Activated T-helper 2 cell treated with anti-CD3 and anti-CD28 coated beads, Interferon-gamma antibody, Interleukin-2, Interleukin-4, amounts not matched to agents 10 μg/mL and 5 μg/mL and 100 μg/mL, durations not matched to agents 14 hours and 24 hours and 36 hours (primary cell): ENCODE measurements at regions of chr6 and their contacts with region 1.

Region 1: GRCh38 chr6:146876271-146877151 is 277.7 kb downstream of the ADGB start:
- DNase-seq: no peak
- H3K4me3 Mint-ChIP-seq: no peak overlapping the region
- H3K27ac Mint-ChIP-seq: peak overlapping the region; percentile 85
- H3K4me1 Mint-ChIP-seq: peaks cover 27% of the 10 kb centered on the region
- H3K27me3 Mint-ChIP-seq: no peaks in the 10 kb centered on the region

Region 2: DNA sequence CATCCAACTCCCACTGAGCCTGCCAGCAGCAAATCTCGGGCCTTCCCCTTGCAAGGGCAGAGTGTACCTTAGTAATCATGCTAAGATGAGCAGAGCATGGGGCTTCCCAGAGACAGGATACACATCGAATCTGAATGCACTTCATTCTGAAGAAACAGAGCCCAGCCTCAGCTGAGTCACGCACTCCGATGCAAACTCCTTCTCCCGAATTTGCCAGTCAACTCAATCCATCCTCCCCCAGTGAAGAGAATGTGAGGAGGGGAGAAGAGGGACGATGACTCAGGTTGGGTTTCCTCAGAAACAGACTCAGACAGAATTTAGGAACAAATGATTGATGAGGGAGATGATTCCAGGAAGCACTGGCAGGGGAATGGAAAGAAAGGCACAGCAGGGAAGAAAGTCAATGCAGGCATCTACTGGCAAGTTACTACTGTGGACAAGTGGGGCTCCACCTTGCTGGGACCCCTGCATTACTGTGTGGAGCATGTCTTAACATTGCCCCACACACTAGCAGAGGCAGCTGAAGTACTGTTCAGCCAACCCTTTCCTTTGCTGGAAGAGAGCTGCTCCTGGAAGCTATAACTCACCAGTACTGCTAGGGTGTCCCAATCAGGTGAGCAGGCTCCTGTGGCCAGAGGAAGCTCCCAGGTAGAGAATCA is 26.1 kb before region 1 on chr6:
- intact Hi-C with region 1: loop called (anchors 1 kb)
- DNase-seq: no peak
- H3K4me3 Mint-ChIP-seq: no peak overlapping the region
- H3K27ac Mint-ChIP-seq: peak overlapping the region; percentile 81
- H3K4me1 Mint-ChIP-seq: peaks cover 36% of the 10 kb centered on the region
- H3K27me3 Mint-ChIP-seq: no peaks in the 10 kb centered on the region

Region 3: GRCh38 chr6:146913842-146914488 is 37.5 kb after region 1 on chr6:
- intact Hi-C with region 1: loop called (anchors 5 kb)
- DNase-seq: no peak
- H3K4me3 Mint-ChIP-seq: no peak overlapping the region
- H3K27ac Mint-ChIP-seq: peak overlapping the region; percentile 10
- H3K4me1 Mint-ChIP-seq: peaks cover 24% of the 10 kb centered on the region
- H3K27me3 Mint-ChIP-seq: no peaks in the 10 kb centered on the region

Region 4: DNA sequence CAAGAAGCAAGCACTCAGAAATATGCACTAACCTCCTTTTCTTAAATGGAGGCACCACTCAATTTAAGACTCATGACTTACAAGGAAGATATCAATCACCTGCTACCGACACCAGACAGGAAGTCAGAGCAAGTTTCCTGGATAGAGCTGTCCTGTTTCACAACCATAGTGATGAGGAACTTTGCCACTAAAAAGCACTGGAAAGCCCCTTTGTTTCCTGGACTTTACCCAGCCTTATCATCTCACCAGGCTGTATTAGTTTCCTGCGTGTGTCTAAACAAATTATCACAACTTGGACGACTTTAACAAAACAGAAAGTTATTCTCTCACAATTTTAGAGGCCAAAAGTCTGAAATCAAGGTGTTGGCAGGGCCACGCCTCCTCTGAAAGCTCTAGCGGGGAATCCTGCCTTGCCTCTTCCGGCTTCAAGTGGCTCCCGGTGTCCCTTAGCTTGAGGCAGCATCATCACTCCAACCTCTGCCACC is 73.9 kb after region 1 on chr6:
- intact Hi-C with region 1: loop called (anchors 1 kb)
- DNase-seq: no peak
- H3K4me3 Mint-ChIP-seq: no peak overlapping the region
- H3K27ac Mint-ChIP-seq: peak overlapping the region; percentile 70
- H3K4me1 Mint-ChIP-seq: peaks cover 12% of the 10 kb centered on the region
- H3K27me3 Mint-ChIP-seq: no peaks in the 10 kb centered on the region

Region 5: DNA sequence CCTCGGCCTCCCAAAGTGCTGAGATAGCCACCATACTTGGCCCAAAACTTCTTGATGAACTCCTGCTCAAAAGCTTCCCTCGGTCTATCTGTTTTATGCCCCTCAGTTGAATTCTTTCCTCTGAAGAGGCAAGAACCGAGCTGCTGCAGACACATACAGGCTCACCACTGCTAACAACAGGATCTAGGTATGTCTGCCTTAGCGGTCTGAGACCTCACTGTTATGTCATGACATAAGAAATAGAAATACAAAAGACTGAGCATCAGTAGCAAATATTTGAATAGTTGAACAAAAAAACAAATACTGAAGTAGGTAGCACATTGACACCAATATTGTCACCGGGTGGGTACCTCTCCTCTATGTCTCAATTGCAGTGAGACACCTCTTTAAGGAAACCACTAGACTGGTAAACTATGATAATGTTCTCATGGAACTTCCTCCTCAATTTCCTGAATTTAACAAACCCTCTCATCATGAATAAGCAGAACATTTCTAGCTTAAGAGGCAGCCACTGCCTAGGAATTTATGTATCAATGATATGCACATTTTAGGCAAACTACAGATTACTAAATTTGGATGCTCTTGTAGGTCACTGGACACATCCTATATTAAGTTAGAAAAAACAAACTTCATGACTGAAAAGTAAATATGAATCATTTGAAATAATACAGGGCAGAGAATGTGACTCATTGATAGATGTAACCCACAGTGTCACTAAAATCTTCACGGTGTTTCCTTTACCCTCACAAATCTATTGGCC is 318.3 kb after region 1 on chr6:
- intact Hi-C with region 1: loop called (anchors 2 kb)
- DNase-seq: no peak
- H3K4me3 Mint-ChIP-seq: no peak overlapping the region
- H3K27ac Mint-ChIP-seq: peak overlapping the region; percentile 78
- H3K4me1 Mint-ChIP-seq: peaks cover 22% of the 10 kb centered on the region
- H3K27me3 Mint-ChIP-seq: no peaks in the 10 kb centered on the region